ENCODE measurements at regions of chr1 and their contacts with region 1.

Region 1: GRCh38 chr1:230066466-230067404 is at the start of gene GALNT2:
- DNase-seq: peak; percentile 92
- H3K4me3 Mint-ChIP-seq: peak within 1 kb of the TSS; percentile 86
- H3K27ac Mint-ChIP-seq: peak within 1 kb of the TSS; percentile 83
- H3K4me1 Mint-ChIP-seq: peaks cover 37% of the 10 kb centered on the region
- H3K27me3 Mint-ChIP-seq: peaks cover 2% of the 10 kb centered on the region
- total RNA-seq, gene GALNT2: 49.5 to 51.0 TPM

Region 2: GRCh38 chr1:230031131-230031530 is 35.6 kb before region 1 on chr1:
- CTCF ChIA-PET with region 1: interaction called, 3 read pairs
- POLR2A ChIA-PET with region 1: interaction called, 5 read pairs
- intact Hi-C with region 1: loop called (anchors 2 kb)
- DNase-seq: peak; percentile 29
- H3K4me3 Mint-ChIP-seq: no peak overlapping the region
- H3K27ac Mint-ChIP-seq: peak overlapping the region; percentile 55
- H3K4me1 Mint-ChIP-seq: peaks cover 17% of the 10 kb centered on the region
- H3K27me3 Mint-ChIP-seq: peaks cover 2% of the 10 kb centered on the region

Region 3: GRCh38 chr1:230084138-230084880 is 17.6 kb after region 1 on chr1:
- CTCF ChIA-PET with region 1: interaction called, 5 read pairs
- POLR2A ChIA-PET with region 1: interaction called, 5 read pairs
- intact Hi-C with region 1: loop called (anchors 1 kb)
- DNase-seq: peak; percentile 90
- H3K4me3 Mint-ChIP-seq: peak overlapping the region; percentile 33
- H3K27ac Mint-ChIP-seq: peak overlapping the region; percentile 78
- H3K4me1 Mint-ChIP-seq: peaks cover 58% of the 10 kb centered on the region
- H3K27me3 Mint-ChIP-seq: peaks cover 1% of the 10 kb centered on the region

Region 4: GRCh38 chr1:230167419-230167852 is 100.7 kb after region 1 on chr1:
- CTCF ChIA-PET with region 1: no interaction called
- POLR2A ChIA-PET with region 1: no interaction called
- intact Hi-C with region 1: loop called (anchors 2 kb)
- DNase-seq: peak; percentile 55
- H3K4me3 Mint-ChIP-seq: no peak overlapping the region
- H3K27ac Mint-ChIP-seq: no peak overlapping the region
- H3K4me1 Mint-ChIP-seq: peaks cover 34% of the 10 kb centered on the region
- H3K27me3 Mint-ChIP-seq: no peaks in the 10 kb centered on the region